Mammary epithelial cell (primary cell): ENCODE measurements at regions of chr14 and their contacts with region 1.

Region 1: DNA sequence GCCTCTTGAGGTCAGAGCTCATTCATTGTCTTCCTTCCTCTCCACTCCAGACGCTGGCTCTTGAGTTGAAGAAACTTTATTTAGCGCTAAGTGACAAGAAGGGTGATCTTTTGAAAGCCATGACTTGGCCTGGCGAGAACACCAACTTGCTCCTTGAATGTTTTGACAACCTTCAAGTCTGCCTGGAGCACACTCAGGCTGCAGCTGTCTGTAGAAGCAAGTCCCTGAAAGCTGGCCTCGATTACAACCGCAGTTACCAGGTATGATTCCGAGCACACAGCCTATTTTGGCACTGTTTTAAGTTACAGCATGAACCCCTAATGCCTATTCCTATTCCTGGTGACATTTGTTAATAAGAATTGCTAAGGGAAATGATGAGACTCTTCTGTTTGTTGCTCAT is 167.6 kb downstream of the ESR2 start:
- DNase-seq: no peak
- H3K4me3 ChIP-seq: no peak overlapping the region
- H3K27ac ChIP-seq: no peak overlapping the region
- H3K4me1 ChIP-seq: no peaks in the 10 kb centered on the region
- H3K27me3 ChIP-seq: no peaks in the 10 kb centered on the region
- CTCF ChIP-seq: no peak

Region 2: GRCh38 chr14:64040044-64040443 is 86.5 kb before region 1 on chr14:
- CTCF ChIA-PET with region 1: no interaction called
- dilution Hi-C with region 1: no loop called
- in situ Hi-C with region 1: no loop called
- intact Hi-C with region 1: no loop called
- DNase-seq: no peak
- H3K4me3 ChIP-seq: no peak overlapping the region
- H3K27ac ChIP-seq: no peak overlapping the region
- H3K4me1 ChIP-seq: no peaks in the 10 kb centered on the region
- H3K27me3 ChIP-seq: no peaks in the 10 kb centered on the region
- CTCF ChIP-seq: peak; percentile 35 to 41

Region 3: GRCh38 chr14:64089920-64090319 is 36.6 kb before region 1 on chr14:
- CTCF ChIA-PET with region 1: no interaction called
- dilution Hi-C with region 1: loop called (anchors 5 kb)
- in situ Hi-C with region 1: no loop called
- intact Hi-C with region 1: no loop called
- DNase-seq: no peak
- H3K4me3 ChIP-seq: no peak overlapping the region
- H3K27ac ChIP-seq: no peak overlapping the region
- H3K4me1 ChIP-seq: no peaks in the 10 kb centered on the region
- H3K27me3 ChIP-seq: no peaks in the 10 kb centered on the region
- CTCF ChIP-seq: no peak

Region 4: DNA sequence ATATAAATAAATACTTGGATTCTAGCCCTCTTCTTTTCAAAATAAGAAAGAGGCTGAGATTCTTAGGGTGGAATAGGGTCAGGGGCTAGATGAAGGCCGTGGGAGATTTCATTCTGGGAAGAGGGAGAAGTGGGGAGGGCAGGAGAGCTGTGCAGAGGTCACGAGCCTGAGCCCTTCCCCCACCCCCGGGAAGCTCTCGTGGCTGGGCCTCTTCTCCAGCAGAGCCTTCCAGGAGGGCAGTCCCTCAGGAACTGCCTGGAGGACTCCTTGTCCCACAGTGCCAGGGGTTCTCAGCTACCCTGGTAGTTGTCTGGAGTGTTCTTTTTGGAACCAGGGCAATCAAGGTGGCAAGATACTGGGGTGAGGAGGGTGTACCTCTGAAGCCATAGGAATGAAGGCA is 73.6 kb after region 1 on chr14:
- CTCF ChIA-PET with region 1: no interaction called
- dilution Hi-C with region 1: no loop called
- in situ Hi-C with region 1: no loop called
- intact Hi-C with region 1: no loop called
- DNase-seq: no peak
- H3K4me3 ChIP-seq: no peak overlapping the region
- H3K27ac ChIP-seq: no peak overlapping the region
- H3K4me1 ChIP-seq: peaks cover 9% of the 10 kb centered on the region
- H3K27me3 ChIP-seq: no peaks in the 10 kb centered on the region
- CTCF ChIP-seq: no peak